ENCODE measurements at regions of chr1 and their contacts with region 1.

Region 1: GRCh38 chr1:160219062-160219929 is 14.1 kb downstream of the PEA15 start:
- DNase-seq: no peak
- H3K4me3 ChIP-seq: no peak overlapping the region
- H3K4me3 Mint-ChIP-seq: no peak overlapping the region
- H3K27ac ChIP-seq: no peak overlapping the region
- H3K27ac Mint-ChIP-seq: peak overlapping the region in 3 of 7 donors; percentile 7 to 46 (median 16)
- H3K4me1 ChIP-seq: no peaks in the 10 kb centered on the region
- H3K4me1 Mint-ChIP-seq: no peaks in the 10 kb centered on the region
- H3K27me3 ChIP-seq: no peaks in the 10 kb centered on the region
- H3K27me3 Mint-ChIP-seq: no peaks in the 10 kb centered on the region

Region 2: DNA sequence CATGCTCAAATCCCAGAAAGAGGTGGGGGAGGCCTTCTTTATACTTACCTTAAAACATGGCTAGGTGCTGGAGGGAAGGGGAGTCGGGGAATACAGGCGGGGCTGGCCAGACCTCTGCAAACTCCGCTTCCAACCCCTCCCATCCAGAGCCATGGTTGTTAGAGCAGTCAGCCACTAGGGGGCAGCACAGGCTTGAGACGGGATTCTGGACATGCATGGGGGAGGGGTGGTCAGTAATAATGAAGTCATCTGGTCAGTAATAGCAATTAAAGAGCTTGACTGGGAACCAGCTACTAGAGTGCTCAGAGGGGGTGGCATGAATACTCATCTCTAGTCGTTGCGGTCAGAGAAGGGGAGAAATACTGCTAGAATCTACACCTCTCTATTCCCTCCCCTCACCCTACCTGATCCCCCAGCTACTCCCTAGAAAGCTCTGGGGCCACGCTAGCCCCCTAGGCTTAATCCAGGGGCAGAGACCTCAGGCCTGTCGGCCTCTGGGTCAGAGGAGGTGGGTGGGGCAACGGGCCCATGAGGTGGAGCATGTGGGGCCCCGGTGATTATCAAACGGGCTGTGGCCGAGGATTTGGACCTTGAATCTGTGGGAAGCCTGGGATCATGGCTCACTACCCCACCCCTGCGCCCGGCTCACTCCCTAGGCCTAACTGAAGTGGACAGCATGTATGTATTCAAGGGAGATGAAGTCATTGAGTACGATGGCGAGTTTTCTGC is 26.0 kb before region 1 on chr1:
- CTCF ChIA-PET with region 1: interaction called, 16 read pairs
- POLR2A ChIA-PET with region 1: no interaction called
- intact Hi-C with region 1: no loop called
- DNase-seq: peak; percentile 67 to 75 (median 68)
- H3K4me3 ChIP-seq: no peak overlapping the region
- H3K4me3 Mint-ChIP-seq: no peak overlapping the region
- H3K27ac ChIP-seq: no peak overlapping the region
- H3K27ac Mint-ChIP-seq: no peak overlapping the region
- H3K4me1 ChIP-seq: peaks cover 9% of the 10 kb centered on the region
- H3K4me1 Mint-ChIP-seq: no peaks in the 10 kb centered on the region
- H3K27me3 ChIP-seq: no peaks in the 10 kb centered on the region
- H3K27me3 Mint-ChIP-seq: peaks cover 1 to 3% of the 10 kb centered on the region in 2 donors

Region 3: DNA sequence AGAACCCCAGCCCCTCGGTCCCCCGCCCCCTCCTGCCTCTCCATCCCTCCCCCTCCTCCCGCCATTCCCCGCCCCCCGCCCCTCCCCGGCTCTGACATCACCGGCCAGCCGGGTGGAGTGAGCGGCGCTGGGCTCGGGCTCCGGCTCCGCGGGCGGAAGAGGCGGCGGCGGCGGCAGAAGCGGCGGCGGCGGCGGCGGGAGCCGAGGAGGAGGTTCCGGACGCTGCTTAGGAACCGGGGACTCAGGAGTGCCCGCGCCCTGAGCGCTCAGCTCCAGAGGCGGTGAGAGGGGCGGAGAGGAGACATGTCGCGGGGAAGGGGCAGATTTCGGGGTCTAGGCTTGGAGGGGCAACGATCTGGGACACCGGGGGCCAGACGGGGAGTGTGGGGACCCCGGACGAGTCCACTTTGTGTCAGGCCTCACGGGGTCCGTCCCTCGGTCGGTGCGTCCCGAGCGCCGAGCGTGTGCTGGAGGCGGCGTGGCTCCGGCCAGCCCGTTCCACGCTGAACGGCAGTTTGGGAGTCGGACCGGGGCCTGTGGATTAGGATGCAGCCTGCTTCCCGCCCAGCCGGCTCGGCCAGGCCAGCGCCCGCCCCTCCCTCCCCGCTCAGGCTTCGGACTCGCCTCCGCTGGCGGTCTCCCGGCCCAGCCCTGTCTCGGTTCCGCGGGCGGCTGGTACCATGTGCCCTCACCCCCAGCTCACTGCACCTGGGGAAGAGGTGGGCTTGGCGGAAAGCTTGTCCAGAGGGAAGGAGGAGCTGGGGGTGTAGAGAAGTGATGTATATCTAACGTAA is 13.9 kb before region 1 on chr1 and contains the start of gene PEA15:
- CTCF ChIA-PET with region 1: interaction called, 4 read pairs
- POLR2A ChIA-PET with region 1: interaction called, 10 read pairs
- intact Hi-C with region 1: no loop called
- DNase-seq: peak; percentile 59 to 68 (median 62)
- H3K4me3 ChIP-seq: peak within 1 kb of the TSS; percentile 31 to 88
- H3K4me3 Mint-ChIP-seq: peak within 1 kb of the TSS; percentile 88 to 96 (median 92)
- H3K27ac ChIP-seq: peak within 1 kb of the TSS; percentile 77
- H3K27ac Mint-ChIP-seq: peak within 1 kb of the TSS; percentile 88 to 98 (median 94)
- H3K4me1 ChIP-seq: peaks cover 30% of the 10 kb centered on the region
- H3K4me1 Mint-ChIP-seq: peaks cover 29 to 48% (median 40%) of the 10 kb centered on the region in 4 donors
- H3K27me3 ChIP-seq: no peaks in the 10 kb centered on the region
- H3K27me3 Mint-ChIP-seq: no peaks in the 10 kb centered on the region
- total RNA-seq, gene PEA15: 23.1 to 25.1 TPM

Region 4: GRCh38 chr1:160925652-160926241 is 706.5 kb after region 1 on chr1:
- CTCF ChIA-PET with region 1: no interaction called
- POLR2A ChIA-PET with region 1: no interaction called
- intact Hi-C with region 1: no loop called
- DNase-seq: no peak
- H3K4me3 ChIP-seq: no peak overlapping the region
- H3K4me3 Mint-ChIP-seq: no peak overlapping the region
- H3K27ac ChIP-seq: no peak overlapping the region
- H3K27ac Mint-ChIP-seq: no peak overlapping the region
- H3K4me1 ChIP-seq: no peaks in the 10 kb centered on the region
- H3K4me1 Mint-ChIP-seq: peaks cover 0 to 4% (median 0%) of the 10 kb centered on the region in 4 donors
- H3K27me3 ChIP-seq: no peaks in the 10 kb centered on the region
- H3K27me3 Mint-ChIP-seq: peaks cover 0 to 7% of the 10 kb centered on the region in 2 donors

Measured in CD4-positive, alpha-beta memory T cell (primary cell).